Calu3 (cell line): ENCODE measurements at regions of chr17 and their contacts with region 1.

Region 1: DNA sequence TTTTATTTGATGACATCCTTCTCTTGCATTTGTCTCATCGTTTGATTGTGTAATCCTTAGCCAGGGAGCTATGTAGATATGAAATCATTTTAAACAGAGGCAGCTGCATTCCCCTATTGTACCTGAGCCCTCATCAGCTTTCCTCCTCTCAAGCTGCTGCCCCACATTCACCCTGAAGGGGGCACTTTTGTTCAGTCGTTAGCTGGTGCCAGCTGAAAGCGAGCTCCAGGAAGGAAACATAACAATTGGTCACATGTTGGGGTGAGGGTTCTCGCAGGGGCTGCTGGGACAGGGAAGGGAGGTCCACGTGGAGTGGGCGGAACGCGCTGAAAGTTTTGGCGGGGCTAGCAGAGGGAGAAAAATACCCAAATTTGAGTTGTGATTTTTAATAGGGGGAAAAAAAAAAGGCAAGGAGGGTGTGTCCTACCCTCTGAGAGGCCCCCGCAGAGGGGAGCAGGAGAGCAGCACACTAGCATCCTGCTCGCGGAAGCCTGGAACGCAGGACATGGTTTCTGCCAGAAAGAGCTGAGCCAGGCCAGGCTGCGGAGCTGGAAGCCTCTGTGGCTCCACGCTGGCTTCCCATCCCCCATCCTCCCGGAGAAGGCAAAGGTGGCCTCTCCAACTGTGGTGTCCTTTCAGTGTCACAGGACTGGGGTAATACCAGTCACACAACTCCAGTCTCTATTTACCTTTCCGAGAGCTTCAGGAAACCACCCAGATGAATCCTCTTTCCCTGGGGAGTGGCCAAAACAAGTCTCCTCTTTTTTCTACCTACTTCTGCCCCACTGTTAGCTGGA is 8.5 kb upstream of the MSL1 start:
- DNase-seq: peak; percentile 100
- H3K4me3 Mint-ChIP-seq: peak overlapping the region; percentile 65
- H3K27ac Mint-ChIP-seq: peak overlapping the region; percentile 74
- H3K4me1 Mint-ChIP-seq: peaks cover 58% of the 10 kb centered on the region
- H3K27me3 Mint-ChIP-seq: no peaks in the 10 kb centered on the region
- CTCF ChIP-seq: no peak

Region 2: GRCh38 chr17:39676198-39676819 is 437.0 kb before region 1 on chr17:
- CTCF ChIA-PET with region 1: interaction called, 10 read pairs
- intact Hi-C with region 1: no loop called
- DNase-seq: peak; percentile 100
- H3K4me3 Mint-ChIP-seq: peak overlapping the region; percentile 3
- H3K27ac Mint-ChIP-seq: peak overlapping the region; percentile 62
- H3K4me1 Mint-ChIP-seq: peaks cover 91% of the 10 kb centered on the region
- H3K27me3 Mint-ChIP-seq: peaks cover 6% of the 10 kb centered on the region
- CTCF ChIP-seq: no peak

Region 3: DNA sequence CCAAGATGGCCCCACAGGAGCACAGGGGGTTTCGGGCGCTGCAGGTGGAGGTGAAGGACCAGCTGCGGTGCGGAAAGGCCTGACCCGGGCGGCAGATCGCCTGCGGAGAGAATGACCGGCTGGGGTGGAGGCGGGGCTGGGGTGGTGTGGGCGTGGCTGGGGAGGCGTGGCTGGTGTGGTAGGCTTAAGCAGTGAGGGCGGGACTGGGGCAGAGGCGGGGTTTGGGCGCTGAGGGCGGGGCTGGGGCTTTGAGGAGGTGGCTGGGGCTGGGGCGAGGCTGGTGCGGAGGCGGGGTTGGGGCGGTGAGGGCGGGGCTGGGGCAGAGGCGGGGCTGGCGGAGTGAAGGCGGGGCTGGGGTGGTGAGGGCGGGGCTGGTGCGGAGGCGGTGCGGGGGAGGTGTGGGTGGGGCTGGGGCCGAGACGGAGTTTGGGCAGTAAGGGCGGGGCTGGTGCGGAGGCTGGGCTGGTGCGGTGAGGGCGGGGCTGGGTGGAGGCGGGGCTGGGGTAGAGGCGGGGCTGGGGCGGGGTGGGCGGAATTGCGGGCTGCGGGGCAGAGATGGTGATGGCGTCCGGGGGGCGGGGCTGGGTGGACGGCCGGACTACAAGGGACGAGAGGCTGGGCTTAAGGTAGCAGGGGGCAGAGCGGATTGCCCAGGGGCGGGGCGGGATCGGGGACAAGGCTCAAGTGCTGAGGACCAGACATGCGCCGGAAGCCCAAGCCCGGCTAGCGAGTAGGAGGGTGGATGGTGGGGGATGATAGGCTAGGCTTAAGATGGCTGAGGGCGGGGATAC is 160.4 kb before region 1 on chr17:
- CTCF ChIA-PET with region 1: interaction called, 15 read pairs
- intact Hi-C with region 1: no loop called
- DNase-seq: peak; percentile 100
- H3K4me3 Mint-ChIP-seq: peak overlapping the region; percentile 58
- H3K27ac Mint-ChIP-seq: peak overlapping the region; percentile 18
- H3K4me1 Mint-ChIP-seq: peaks cover 42% of the 10 kb centered on the region
- H3K27me3 Mint-ChIP-seq: peaks cover 15% of the 10 kb centered on the region
- CTCF ChIP-seq: no peak

Region 4: GRCh38 chr17:40075201-40075941 is 37.9 kb before region 1 on chr17:
- CTCF ChIA-PET with region 1: interaction called, 670 read pairs
- intact Hi-C with region 1: loop called (anchors 1 kb)
- DNase-seq: peak; percentile 98
- H3K4me3 Mint-ChIP-seq: peak overlapping the region; percentile 14
- H3K27ac Mint-ChIP-seq: peak overlapping the region; percentile 6
- H3K4me1 Mint-ChIP-seq: peaks cover 70% of the 10 kb centered on the region
- H3K27me3 Mint-ChIP-seq: no peaks in the 10 kb centered on the region
- CTCF ChIP-seq: no peak

Region 5: DNA sequence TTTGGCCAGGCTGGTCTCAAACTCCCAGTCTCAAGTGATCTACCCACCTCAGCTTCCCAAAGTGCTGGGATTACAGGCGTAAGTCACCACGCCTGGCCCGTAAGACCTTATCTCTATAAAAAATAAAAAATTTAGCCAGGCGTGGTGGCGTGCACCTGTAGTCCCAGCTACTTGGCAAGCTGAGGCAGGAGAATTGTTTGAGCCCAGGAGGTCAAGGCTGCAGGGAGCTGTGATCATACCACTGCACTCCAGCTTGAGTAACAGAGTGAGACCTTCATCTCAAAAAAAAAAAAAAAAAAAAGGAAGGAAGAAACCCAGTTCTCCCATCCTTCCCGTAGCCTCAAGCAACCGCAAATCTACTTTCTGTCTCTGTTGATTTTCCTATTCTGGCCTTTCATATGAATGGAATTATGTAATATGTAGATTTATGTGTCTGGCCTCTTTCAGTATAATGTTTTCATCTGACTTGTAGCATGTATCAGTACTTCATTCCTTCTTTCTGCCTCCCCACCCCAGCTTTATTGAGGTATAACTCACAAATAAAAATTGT is 38.2 kb after region 1 on chr17:
- CTCF ChIA-PET with region 1: interaction called, 86 read pairs
- intact Hi-C with region 1: no loop called
- DNase-seq: no peak
- H3K4me3 Mint-ChIP-seq: no peak overlapping the region
- H3K27ac Mint-ChIP-seq: no peak overlapping the region
- H3K4me1 Mint-ChIP-seq: peaks cover 5% of the 10 kb centered on the region
- H3K27me3 Mint-ChIP-seq: no peaks in the 10 kb centered on the region
- CTCF ChIP-seq: no peak

Region 6: DNA sequence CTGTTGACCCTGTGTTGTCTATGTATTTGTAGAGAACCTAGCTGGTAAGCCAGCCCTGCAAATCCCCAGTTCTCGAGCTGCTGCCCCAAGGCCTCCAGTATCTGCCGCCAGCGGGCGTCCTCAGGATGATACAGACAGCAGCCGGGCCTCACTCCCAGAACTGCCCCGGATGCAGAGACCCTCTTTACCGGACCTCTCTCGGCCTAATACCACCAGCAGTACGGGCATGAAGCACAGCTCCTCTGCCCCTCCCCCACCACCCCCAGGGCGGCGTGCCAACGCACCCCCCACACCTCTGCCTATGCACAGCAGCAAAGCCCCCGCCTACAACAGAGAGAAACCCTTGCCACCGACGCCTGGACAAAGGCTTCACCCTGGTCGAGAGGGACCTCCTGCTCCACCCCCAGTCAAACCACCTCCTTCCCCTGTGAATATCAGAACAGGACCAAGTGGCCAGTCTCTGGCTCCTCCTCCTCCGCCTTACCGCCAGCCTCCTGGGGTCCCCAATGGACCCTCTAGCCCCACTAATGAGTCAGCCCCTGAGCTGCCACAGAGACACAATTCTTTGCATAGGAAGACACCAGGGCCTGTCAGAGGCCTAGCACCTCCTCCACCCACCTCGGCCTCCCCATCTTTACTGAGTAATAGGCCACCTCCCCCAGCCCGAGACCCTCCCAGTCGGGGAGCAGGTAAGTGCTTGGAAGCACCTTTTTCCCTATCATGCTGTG is 151.3 kb after region 1 on chr17:
- CTCF ChIA-PET with region 1: interaction called, 10 read pairs
- intact Hi-C with region 1: no loop called
- DNase-seq: no peak
- H3K4me3 Mint-ChIP-seq: no peak overlapping the region
- H3K27ac Mint-ChIP-seq: no peak overlapping the region
- H3K4me1 Mint-ChIP-seq: no peaks in the 10 kb centered on the region
- H3K27me3 Mint-ChIP-seq: no peaks in the 10 kb centered on the region
- CTCF ChIP-seq: no peak